ENCODE measurements at regions of chr1 and their contacts with region 1.

Region 1: DNA sequence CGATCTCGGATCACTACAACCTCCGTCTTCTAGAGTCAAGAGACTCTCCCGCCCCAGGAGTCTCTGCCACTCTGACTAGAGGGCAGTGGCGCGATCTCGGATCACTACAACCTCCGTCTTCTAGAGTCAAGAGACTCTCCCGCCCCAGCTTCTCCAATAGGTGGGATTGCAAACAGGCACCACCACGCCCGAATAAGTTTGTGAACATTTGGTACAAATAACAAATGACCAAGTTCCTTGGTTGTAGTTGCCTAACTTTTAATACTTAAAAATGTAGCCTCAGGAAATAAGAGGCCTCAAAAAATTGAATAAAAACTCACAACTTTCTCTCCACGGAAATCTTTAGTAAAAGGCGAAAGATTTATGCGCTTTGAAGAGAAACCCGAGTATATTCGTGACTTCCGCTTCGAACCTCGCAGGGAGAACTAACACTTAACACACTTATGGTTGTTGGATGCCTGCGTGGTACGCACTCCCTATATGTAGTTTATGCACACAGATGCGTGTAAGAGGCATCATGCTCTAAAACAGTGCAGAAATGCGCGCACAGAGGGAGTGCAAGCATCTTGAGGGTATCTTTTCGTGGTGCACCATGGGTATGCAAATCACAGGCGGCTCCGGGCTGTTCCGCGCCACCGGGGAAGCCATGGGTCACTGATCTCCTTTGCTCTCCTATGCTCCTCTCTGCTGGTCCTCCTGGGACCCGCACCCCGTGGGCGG is 11.4 kb downstream of the BTBD19 start:
- DNase-seq: peak; percentile 85

Region 2: GRCh38 chr1:44730741-44731512 is 88.8 kb before region 1 on chr1 and contains the start of gene RNU5D-1:
- CTCF ChIA-PET with region 1: interaction called, 4 read pairs
- POLR2A ChIA-PET with region 1: interaction called, 15 read pairs
- DNase-seq: peak; percentile 77

Region 3: DNA sequence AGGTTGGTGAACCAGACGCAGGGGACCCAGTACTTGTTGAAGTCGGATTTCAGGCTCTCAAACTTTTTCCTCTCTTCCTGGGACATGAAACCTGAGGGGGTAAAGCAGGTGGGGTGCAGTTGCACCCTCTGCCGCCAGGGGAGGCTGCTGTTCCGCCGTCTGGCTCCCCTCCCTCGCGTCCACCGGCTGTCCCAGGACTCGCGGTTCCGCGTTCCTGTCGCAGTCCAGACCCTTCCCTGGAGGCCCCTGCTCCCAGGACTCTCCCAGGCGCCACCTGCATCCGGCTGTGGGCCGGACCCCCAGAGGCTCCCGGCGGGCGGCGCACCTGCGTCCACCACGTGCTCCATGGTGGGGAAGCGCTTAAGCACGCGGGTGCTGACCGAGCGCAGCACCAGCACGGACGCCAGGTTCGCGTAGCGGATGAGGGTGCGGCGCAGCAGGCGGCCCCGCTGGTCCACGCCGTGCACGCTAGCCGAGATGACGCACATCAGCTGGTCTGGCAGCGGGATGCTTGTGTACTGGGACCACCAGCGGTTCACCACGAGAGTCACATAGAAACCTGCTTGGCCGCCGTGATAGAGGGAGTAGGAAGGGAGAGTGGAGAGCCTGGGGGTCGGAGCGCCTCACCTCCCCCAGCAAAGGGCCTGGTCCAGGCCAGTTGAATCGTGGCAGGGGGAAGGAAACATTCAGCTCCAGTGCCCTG is 33.5 kb before region 1 on chr1:
- CTCF ChIA-PET with region 1: no interaction called
- POLR2A ChIA-PET with region 1: interaction called, 19 read pairs
- DNase-seq: peak; percentile 79

Region 4: DNA sequence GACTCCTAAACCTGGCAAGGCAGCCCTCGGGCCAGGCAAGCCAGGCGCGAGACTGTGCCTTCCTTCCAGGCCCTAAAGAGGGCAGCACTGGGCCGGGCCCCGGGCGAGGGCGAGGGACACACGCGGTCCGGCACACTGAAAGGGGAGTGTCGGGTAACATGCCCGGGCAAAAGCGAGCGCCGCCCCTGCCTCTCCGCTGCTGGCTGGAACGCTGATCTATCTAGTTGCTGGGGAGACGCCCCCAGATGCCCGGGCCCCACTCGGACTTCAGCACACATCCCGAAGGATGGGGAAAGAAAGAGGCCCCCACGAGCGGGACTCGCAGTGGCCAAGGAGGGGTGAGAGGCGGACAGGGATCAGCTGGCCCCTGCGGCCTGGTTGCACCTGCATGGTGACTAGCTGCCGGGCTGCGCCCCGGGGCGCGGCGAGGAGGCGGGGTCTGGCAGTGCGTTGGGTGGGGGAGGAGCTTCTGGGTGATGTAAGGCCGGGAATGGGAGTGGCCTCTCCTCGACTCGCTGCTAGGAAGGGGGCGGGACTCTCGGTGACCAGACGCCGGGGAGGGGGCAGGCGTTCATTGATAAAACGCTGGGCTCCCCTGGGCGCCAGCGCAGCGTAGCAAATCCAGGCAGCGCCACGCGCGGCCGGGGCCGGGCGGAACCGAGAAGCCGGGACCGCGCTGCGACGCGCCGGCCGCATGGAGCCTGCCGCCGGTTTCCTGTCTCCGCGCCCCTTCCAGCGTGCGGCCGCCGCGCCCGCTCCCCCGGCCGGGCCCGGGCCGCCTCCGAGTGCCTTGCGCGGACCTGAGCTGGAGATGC is 19.8 kb before region 1 on chr1 and contains the start of gene PLK3:
- CTCF ChIA-PET with region 1: interaction called, 4 read pairs
- POLR2A ChIA-PET with region 1: interaction called, 137 read pairs
- DNase-seq: peak; percentile 91

Region 5: GRCh38 chr1:44830900-44831304 is 11.1 kb after region 1 on chr1:
- CTCF ChIA-PET with region 1: interaction called, 3 read pairs
- POLR2A ChIA-PET with region 1: interaction called, 34 read pairs
- DNase-seq: no peak

Measured in HEK293T (cell line).